Activated CD4-positive, alpha-beta memory T cell treated with anti-CD3 and anti-CD28 coated beads for 36 hours (primary cell): ENCODE measurements at regions of chr6 and their contacts with region 1.

Region 1: DNA sequence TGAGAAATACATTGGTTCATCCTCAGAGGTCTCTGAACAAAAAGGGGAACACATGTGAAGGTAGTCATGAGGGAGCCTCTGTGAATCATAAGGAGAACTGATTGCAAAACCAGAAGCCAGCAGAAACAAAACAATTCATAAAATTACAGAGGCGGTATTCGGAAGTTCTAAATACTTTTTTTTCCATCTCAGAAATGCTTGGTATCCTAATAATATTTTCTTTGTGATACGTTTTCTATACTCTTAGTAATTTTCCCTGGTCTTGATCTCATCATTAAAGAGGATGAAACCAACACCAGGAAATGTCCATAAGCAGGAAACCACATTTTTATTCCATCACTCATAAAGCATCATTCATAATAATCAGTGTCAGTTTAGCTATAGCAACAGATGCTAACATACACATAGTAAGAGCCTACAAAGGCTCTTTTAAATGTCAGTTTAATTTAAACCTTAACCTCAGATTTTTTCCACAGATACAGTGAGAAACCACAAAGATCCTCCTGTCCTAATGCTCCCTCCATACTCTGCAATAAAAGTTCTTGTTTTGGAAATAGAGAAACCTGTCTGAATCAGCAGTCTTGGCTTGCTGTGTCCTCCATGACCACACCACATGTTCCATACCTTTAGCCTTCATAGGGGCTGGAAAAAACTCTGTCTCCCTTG is 29.2 kb downstream of the SGK1 start:
- DNase-seq: peak; percentile 15
- H3K4me3 Mint-ChIP-seq: peak overlapping the region; percentile 21
- H3K27ac Mint-ChIP-seq: peak overlapping the region; percentile 85
- H3K4me1 Mint-ChIP-seq: peaks cover 22% of the 10 kb centered on the region
- H3K27me3 Mint-ChIP-seq: no peaks in the 10 kb centered on the region

Region 2: DNA sequence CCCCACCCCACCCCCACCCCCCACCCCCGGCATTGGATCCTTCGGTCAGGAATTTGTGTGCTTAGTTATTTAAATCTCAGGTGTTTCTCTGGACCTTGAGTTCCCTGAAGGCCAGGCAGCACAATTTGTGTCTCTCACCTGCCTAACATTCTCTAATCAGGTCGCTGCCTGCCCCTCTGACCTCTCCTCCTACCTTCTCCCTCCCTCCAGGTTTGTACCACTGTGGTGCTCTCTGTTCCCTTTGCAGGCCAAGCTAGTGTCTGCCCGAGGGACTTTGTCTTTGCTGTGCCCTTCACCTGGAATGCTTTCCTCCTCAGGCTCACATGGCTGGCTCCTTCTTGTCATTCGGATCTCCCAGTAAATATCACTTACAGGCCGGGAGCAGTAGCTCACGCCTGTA is 104.8 kb before region 1 on chr6:
- CTCF ChIA-PET with region 1: no interaction called
- POLR2A ChIA-PET with region 1: no interaction called
- intact Hi-C with region 1: no loop called
- DNase-seq: no peak
- H3K4me3 Mint-ChIP-seq: no peak overlapping the region
- H3K27ac Mint-ChIP-seq: no peak overlapping the region
- H3K4me1 Mint-ChIP-seq: no peaks in the 10 kb centered on the region
- H3K27me3 Mint-ChIP-seq: no peaks in the 10 kb centered on the region

Region 3: DNA sequence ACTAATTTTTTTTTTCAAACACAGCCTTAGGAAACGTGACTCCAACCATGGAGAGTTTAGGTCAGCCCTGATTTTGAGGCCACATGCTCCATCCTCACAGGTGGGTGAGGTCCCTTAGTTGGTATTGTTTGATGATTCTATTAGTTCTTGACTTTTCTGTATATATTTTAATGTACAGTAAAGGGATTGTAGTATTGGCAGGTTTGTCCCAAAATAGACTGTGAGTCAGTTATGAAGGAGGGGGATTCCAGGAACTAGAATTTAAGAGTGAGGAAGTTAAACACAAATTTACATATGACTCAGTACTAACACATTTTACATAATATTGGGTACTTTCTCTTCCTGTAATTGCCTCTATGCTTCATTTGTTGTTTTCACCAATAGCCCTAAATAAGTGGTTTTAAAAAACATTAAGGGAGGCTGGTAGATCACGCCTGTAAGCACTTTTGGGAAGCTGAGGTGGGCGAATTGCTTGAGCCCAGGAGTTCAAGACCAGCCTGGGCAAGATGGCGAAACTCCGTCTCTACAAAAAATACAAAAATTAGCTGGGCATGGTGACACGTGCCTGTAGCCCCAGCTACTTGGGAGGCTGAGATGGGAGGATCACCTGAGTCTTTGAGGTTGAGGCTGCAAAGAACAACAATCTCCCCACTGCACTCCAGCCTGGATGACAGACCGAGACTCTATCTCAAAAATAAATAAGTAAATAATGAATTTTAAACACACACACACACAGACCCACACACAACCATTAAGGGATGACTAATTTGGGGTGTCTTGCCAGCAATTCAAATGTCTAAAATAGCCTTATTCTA is 52.5 kb before region 1 on chr6:
- CTCF ChIA-PET with region 1: no interaction called
- POLR2A ChIA-PET with region 1: interaction called, 3 read pairs
- intact Hi-C with region 1: loop called (anchors 1 kb)
- DNase-seq: peak; percentile 22
- H3K4me3 Mint-ChIP-seq: peak overlapping the region; percentile 29
- H3K27ac Mint-ChIP-seq: peak overlapping the region; percentile 85
- H3K4me1 Mint-ChIP-seq: peaks cover 41% of the 10 kb centered on the region
- H3K27me3 Mint-ChIP-seq: no peaks in the 10 kb centered on the region

Region 4: DNA sequence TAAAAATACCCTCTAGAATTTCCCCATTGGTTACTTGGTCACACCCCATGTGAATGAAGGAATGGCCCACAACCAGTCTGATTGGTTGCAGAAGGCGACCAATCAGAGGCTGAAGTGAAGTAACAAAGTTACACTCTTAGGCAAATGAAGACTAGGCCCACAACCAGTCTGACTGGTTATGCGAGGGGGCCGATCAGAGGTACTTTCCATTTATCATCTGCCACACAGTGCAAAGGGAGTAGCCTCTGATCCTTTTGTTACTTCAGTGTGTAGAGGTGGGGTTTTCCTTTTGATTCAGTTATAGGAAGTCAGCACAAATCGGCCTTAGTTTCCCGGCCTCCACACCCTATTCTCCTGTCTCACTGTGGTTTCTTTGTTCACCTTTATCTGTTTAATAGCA is 90.4 kb after region 1 on chr6:
- CTCF ChIA-PET with region 1: no interaction called
- POLR2A ChIA-PET with region 1: no interaction called
- intact Hi-C with region 1: loop called (anchors 1 kb)
- DNase-seq: peak; percentile 81
- H3K4me3 Mint-ChIP-seq: peak overlapping the region; percentile 27
- H3K27ac Mint-ChIP-seq: peak overlapping the region; percentile 83
- H3K4me1 Mint-ChIP-seq: peaks cover 32% of the 10 kb centered on the region
- H3K27me3 Mint-ChIP-seq: no peaks in the 10 kb centered on the region